A673 (cell line): ENCODE measurements at regions of chr11 and their contacts with region 1.

Region 1: GRCh38 chr11:75867775-75868374 is 52.9 kb downstream of the UVRAG start:
- DNase-seq: peak; percentile 68
- H3K4me3 ChIP-seq: no peak overlapping the region
- H3K27ac ChIP-seq: no peak overlapping the region
- H3K4me1 ChIP-seq: no peaks in the 10 kb centered on the region
- H3K27me3 ChIP-seq: no peaks in the 10 kb centered on the region
- CTCF ChIP-seq: peak; percentile 88

Region 2: DNA sequence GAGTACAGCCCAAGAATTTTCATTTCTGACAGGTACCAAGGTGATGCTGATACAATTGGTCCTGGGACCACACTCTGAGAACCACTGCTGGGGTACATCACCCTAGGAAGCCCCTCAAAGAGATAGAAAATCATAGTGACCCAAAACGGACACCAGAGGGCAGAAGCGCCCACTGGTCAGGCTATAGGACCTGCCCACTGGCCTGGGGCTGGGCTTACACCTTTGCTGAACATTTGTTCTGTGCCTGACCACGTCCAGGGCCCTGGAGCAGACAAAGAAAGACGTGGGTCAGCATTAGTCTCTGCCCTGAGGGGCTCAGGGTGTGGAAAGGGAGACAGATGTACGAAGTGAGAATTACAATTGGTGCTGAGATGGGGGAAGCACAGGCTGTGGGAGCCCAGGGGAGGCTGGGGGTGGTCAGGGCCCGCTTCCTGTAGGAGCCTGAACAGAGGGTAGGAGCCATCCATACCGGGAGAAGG is 320.3 kb before region 1 on chr11:
- CTCF ChIA-PET with region 1: no interaction called
- POLR2A ChIA-PET with region 1: no interaction called
- intact Hi-C with region 1: loop called (anchors 10 kb)
- DNase-seq: peak; percentile 65
- H3K4me3 ChIP-seq: no peak overlapping the region
- H3K27ac ChIP-seq: no peak overlapping the region
- H3K4me1 ChIP-seq: no peaks in the 10 kb centered on the region
- H3K27me3 ChIP-seq: no peaks in the 10 kb centered on the region
- CTCF ChIP-seq: peak; percentile 94

Region 3: GRCh38 chr11:75721855-75722668 is 145.8 kb before region 1 on chr11:
- CTCF ChIA-PET with region 1: interaction called, 3 read pairs
- POLR2A ChIA-PET with region 1: no interaction called
- intact Hi-C with region 1: loop called (anchors 1 kb)
- DNase-seq: no peak
- H3K4me3 ChIP-seq: no peak overlapping the region
- H3K27ac ChIP-seq: no peak overlapping the region
- H3K4me1 ChIP-seq: no peaks in the 10 kb centered on the region
- H3K27me3 ChIP-seq: no peaks in the 10 kb centered on the region
- CTCF ChIP-seq: no peak

Region 4: DNA sequence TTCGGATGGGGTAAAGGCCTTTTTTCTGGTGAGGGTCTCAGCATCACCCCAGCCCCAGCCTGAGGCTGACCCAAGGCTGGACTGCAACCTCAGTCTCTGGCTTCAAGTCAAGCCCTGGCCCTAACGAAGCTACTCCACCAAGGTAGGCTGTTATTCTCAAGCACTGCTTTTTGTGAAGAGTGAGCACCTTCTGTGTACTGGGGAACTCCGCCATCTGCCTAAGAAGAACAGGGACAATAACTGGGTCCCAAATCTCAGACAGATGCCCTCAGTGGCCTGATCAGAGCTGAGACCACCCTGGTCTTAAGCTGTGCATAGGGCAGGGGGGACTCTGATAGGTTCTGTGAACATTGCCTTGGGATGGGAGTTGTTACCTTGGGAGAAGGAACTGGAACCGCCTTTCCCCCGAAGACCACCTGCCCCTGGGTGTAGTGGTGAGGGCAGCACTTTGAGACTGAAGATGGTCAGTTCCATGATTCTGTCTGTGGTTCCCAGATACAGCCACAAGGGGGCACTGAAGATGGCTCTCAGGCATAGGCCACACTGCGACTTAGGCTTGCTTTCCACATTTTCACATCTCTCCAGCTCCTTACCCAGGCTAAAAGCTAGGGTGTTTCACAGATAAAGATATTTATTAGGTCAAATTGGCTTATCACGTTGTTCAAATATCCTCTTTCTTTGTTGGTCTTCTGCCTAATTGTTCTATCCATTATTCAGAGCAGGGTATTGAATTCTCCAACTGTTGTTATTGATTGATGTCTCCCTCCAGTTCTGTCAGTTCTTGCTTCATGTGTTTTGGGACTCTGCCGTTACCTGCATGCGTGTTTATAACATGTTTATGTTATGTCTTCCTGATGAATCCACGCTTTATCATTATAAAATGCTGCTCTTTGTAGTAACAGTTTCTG is 64.7 kb before region 1 on chr11:
- CTCF ChIA-PET with region 1: interaction called, 15 read pairs
- POLR2A ChIA-PET with region 1: no interaction called
- intact Hi-C with region 1: loop called (anchors 1 kb)
- DNase-seq: peak; percentile 76
- H3K4me3 ChIP-seq: no peak overlapping the region
- H3K27ac ChIP-seq: no peak overlapping the region
- H3K4me1 ChIP-seq: no peaks in the 10 kb centered on the region
- H3K27me3 ChIP-seq: no peaks in the 10 kb centered on the region
- CTCF ChIP-seq: peak; percentile 97